Naive thymus-derived CD8-positive, alpha-beta T cell (primary cell): ENCODE measurements at regions of chr4 and their contacts with region 1.

Region 1: DNA sequence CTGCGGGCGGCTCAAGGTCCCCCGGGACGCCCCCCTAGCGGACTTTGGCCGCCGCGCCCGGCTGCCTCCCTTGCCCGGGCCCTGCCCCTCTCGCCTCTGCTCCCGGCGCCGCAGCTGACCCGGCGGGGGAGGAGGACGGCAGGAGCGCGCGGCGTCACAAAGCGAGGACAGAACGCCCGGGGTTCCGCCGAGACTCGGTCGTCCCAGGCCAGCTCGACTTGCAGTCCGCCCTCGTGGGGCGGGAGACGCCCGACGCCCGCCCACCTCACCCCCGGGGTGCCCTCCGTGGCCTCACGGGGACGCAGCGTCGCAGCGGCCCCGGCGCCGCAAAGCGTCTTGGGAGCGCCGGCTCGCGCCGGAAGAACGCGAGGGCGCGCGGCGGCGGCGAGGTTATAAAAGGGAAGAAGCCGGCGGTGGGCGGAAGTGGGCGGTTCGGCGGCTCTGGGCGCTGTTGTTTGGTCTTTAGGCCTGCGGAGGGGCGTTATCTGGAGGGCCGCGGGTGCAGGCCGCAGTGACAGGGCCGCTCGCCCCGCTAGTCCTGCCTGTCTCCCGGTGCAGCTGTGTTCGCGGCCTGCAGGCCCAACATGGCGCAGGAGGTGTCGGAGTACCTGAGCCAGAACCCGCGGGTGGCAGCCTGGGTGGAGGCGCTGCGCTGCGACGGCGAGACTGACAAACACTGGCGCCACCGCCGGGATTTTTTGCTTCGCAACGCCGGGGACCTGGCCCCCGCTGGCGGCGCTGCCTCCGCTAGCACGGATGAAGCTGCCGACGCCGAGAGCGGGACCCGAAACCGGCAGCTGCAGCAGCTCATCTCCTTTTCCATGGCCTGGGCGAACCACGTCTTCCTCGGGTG is at the start of gene CDKN2AIP:
- DNase-seq: peak; percentile 88 to 97 (median 94)
- ATAC-seq: peak; percentile 87
- H3K4me3 Mint-ChIP-seq: peak within 1 kb of the TSS; percentile 93 to 99 (median 96)
- H3K27ac Mint-ChIP-seq: peak within 1 kb of the TSS; percentile 95 to 99 (median 98)
- H3K4me1 Mint-ChIP-seq: peaks cover 14 to 57% (median 52%) of the 10 kb centered on the region in 4 donors
- H3K27me3 Mint-ChIP-seq: no peaks in the 10 kb centered on the region
- polyA plus RNA-seq, gene CDKN2AIP: 28.2 to 45.4 (median 30.9) TPM

Region 2: GRCh38 chr4:183362916-183363542 is 81.4 kb before region 1 on chr4:
- POLR2A ChIA-PET with region 1: no interaction called
- DNase-seq: no peak
- ATAC-seq: no peak
- H3K4me3 Mint-ChIP-seq: no peak overlapping the region
- H3K27ac Mint-ChIP-seq: peak overlapping the region in 1 of 10 donors; percentile 37
- H3K4me1 Mint-ChIP-seq: no peaks in the 10 kb centered on the region
- H3K27me3 Mint-ChIP-seq: peaks cover 0 to 1% (median 0%) of the 10 kb centered on the region in 5 donors

Region 3: DNA sequence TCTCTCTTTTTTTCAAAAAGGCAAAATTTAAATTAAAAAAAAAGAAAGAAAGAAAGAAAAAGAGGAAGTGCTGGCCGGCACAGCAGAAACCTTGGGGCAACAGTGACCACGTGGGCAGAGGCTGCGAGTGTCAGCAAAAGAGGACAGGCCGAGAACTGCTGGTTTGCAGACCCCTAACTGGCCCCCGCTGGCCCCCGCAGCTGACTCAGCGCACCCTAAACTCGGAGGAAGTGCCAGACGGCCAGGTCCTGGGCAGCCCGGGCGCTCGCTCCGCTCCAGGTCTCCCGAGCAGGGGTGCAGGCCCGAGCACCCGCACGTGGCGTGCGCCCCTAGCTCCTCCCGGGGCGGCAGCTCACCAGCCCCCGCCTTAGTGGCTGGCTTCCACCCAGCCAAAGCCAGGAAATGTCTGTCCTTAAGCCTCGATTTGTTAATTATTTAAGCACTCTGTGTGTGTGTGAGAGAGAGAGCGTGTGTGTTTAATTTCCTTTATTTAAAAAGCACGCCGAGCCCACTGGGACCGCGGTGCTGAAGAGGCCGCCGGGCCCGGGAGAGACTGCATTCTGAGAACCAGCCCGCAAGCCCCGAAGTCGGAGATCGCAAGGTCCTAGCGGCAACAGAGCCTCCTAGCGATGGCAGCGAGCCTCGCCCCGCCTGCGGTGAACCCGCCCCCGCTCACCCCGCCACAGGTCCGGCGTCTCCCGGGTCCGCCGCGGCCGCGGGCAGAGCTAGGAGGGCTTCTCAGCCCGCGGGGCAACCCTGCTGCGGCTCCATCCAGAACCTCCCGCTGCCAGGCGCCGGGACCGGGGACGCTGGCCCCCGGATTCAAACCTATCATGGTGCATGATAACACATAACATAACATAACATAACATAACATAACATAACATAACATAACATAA is 46.0 kb before region 1 on chr4:
- POLR2A ChIA-PET with region 1: interaction called, 15 read pairs
- DNase-seq: peak; percentile 38 to 77 (median 55)
- ATAC-seq: peak; percentile 94 to 96
- H3K4me3 Mint-ChIP-seq: peak overlapping the region; percentile 78 to 95 (median 91)
- H3K27ac Mint-ChIP-seq: peak overlapping the region in 9 of 10 donors; percentile 75 to 95 (median 90)
- H3K4me1 Mint-ChIP-seq: peaks cover 18 to 32% (median 25%) of the 10 kb centered on the region in 4 donors
- H3K27me3 Mint-ChIP-seq: peaks cover 0 to 5% (median 0%) of the 10 kb centered on the region in 5 donors

Region 4: DNA sequence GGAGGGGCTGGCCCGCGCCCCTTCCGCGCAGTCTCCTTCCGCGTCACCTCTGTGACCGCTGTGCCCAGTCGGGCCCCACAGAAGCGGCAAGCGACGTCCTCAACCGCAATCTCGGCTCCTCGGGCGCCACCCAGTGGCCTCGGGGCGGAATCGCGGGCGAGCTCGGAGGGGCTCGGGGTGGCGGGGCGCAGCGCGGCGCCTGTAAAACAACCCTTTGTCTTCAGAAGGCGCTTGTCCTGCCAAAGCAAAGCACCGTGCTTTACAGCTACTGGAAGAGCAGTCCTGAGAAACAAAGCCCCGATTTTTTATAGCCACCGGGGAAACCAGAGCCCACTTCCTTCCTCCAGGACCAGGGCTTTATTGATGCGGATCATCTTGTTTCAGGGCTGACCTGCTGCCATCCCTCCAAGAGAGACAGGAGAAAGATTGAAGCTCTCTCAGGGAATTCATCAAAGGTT is 37.3 kb before region 1 on chr4:
- POLR2A ChIA-PET with region 1: interaction called, 24 read pairs
- DNase-seq: peak; percentile 85 to 97 (median 92)
- ATAC-seq: peak; percentile 95
- H3K4me3 Mint-ChIP-seq: peak overlapping the region; percentile 79 to 89 (median 85)
- H3K27ac Mint-ChIP-seq: peak overlapping the region; percentile 88 to 98 (median 92)
- H3K4me1 Mint-ChIP-seq: peaks cover 7 to 18% (median 14%) of the 10 kb centered on the region in 4 donors
- H3K27me3 Mint-ChIP-seq: no peaks in the 10 kb centered on the region

Region 5: GRCh38 chr4:183430317-183430993 is 14.0 kb before region 1 on chr4:
- POLR2A ChIA-PET with region 1: interaction called, 64 read pairs
- DNase-seq: peak in 5 of 10 donors; percentile 10 to 42 (median 18)
- ATAC-seq: peak; percentile 92 to 98
- H3K4me3 Mint-ChIP-seq: peak overlapping the region; percentile 29 to 74 (median 64)
- H3K27ac Mint-ChIP-seq: peak overlapping the region; percentile 79 to 96 (median 90)
- H3K4me1 Mint-ChIP-seq: peaks cover 11 to 40% (median 35%) of the 10 kb centered on the region in 4 donors
- H3K27me3 Mint-ChIP-seq: no peaks in the 10 kb centered on the region

Region 6: GRCh38 chr4:183504064-183504929 is 59.9 kb after region 1 on chr4:
- POLR2A ChIA-PET with region 1: interaction called, 77 read pairs
- DNase-seq: peak; percentile 98 to 100 (median 100)
- ATAC-seq: peak; percentile 74 to 77
- H3K4me3 Mint-ChIP-seq: peak overlapping the region; percentile 84 to 98 (median 96)
- H3K27ac Mint-ChIP-seq: peak overlapping the region; percentile 91 to 100 (median 96)
- H3K4me1 Mint-ChIP-seq: peaks cover 14 to 45% (median 33%) of the 10 kb centered on the region in 4 donors
- H3K27me3 Mint-ChIP-seq: no peaks in the 10 kb centered on the region